Panc1 (cell line): ENCODE measurements at regions of chr1 and their contacts with region 1.

Region 1: GRCh38 chr1:159204161-159205141 is at the start of gene ACKR1:
- DNase-seq: no peak
- ATAC-seq: no peak
- H3K4me3 ChIP-seq: no peak within 1 kb of the TSS
- H3K27ac ChIP-seq: no peak within 1 kb of the TSS
- H3K4me1 ChIP-seq: no peaks in the 10 kb centered on the region
- H3K27me3 ChIP-seq: peaks cover 13% of the 10 kb centered on the region
- CTCF ChIP-seq: no peak
- total RNA-seq, gene ACKR1: not detected

Region 2: DNA sequence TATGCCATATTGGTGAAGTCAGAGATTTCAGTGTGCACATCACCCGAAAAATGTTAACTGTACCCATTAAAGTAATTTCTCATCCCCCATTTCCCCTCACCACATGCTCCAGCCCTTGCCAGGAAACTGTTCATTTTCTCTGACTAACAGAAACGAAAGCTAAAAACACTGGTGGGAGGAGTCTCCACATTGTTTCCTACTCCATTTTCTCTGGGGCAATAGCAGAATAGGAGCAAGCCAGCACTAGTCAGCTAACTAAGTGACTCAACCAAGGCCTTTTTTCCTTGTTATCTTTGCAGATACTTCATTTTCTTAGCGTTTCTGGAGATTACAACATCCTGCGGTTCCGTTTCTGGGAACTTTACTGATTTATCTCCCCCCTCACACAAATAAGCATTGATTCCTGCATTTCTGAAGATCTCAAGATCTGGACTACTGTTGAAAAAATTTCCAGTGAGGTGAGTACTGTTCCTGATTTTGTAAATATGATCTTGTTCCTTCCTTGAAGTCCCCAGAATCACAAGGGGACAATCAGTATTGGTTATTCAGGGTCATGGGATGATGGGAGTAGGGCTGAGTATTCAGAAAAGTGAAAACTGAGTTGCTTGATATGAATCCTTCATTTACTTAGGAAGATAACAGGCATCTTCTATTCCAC is 194.6 kb before region 1 on chr1 and contains the start of gene IFI16:
- CTCF ChIA-PET with region 1: no interaction called
- POLR2A ChIA-PET with region 1: no interaction called
- in situ Hi-C with region 1: no loop called
- intact Hi-C with region 1: no loop called
- DNase-seq: no peak
- ATAC-seq: no peak
- H3K4me3 ChIP-seq: peak within 1 kb of the TSS; percentile 30 to 36; a peak in 3 of 4 replicates
- H3K27ac ChIP-seq: no peak within 1 kb of the TSS
- H3K4me1 ChIP-seq: no peaks in the 10 kb centered on the region
- H3K27me3 ChIP-seq: peaks cover under 1% of the 10 kb centered on the region; the same call in 1 of the 2 replicates
- CTCF ChIP-seq: no peak
- total RNA-seq, gene IFI16: 0.36 TPM

Region 3: GRCh38 chr1:159132271-159132881 is 72.1 kb before region 1 on chr1:
- CTCF ChIA-PET with region 1: interaction called, 16 read pairs
- POLR2A ChIA-PET with region 1: no interaction called
- in situ Hi-C with region 1: no loop called
- intact Hi-C with region 1: no loop called
- DNase-seq: peak; percentile 36
- ATAC-seq: peak; percentile 82
- H3K4me3 ChIP-seq: no peak overlapping the region
- H3K27ac ChIP-seq: no peak overlapping the region
- H3K4me1 ChIP-seq: no peaks in the 10 kb centered on the region
- H3K27me3 ChIP-seq: peaks cover 10% of the 10 kb centered on the region; the same call in 1 of the 2 replicates
- CTCF ChIP-seq: peak; percentile 91

Region 4: DNA sequence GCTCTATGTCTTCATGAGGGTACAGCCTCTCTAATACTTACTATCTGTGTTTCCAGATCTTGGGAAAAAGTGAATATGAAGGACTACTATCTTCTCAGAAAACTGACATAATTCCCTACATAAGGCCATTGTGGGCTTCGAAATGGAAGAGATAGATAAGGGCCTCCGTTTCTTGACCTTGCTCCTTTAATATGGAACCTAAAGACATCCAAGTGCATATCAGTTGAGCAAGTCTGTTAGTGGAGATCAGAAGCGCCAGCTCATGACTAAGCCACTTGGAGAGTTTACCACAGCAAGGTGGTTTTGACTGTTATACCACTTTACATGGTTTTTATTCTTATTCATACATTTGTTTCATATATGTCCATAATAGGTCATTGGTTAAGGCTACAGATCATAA is 62.4 kb after region 1 on chr1:
- CTCF ChIA-PET with region 1: no interaction called
- POLR2A ChIA-PET with region 1: no interaction called
- in situ Hi-C with region 1: no loop called
- intact Hi-C with region 1: no loop called
- DNase-seq: no peak
- ATAC-seq: no peak
- H3K4me3 ChIP-seq: no peak overlapping the region
- H3K27ac ChIP-seq: no peak overlapping the region
- H3K4me1 ChIP-seq: no peaks in the 10 kb centered on the region
- H3K27me3 ChIP-seq: no peaks in the 10 kb centered on the region
- CTCF ChIP-seq: no peak